Activated naive CD4-positive, alpha-beta T cell treated with anti-CD3 and anti-CD28 coated beads, Interleukin-2, amount 10 ng/mL, durations not matched to agents 7 days and 5 days (primary cell): ENCODE measurements at regions of chr22 and their contacts with region 1.

Region 1: DNA sequence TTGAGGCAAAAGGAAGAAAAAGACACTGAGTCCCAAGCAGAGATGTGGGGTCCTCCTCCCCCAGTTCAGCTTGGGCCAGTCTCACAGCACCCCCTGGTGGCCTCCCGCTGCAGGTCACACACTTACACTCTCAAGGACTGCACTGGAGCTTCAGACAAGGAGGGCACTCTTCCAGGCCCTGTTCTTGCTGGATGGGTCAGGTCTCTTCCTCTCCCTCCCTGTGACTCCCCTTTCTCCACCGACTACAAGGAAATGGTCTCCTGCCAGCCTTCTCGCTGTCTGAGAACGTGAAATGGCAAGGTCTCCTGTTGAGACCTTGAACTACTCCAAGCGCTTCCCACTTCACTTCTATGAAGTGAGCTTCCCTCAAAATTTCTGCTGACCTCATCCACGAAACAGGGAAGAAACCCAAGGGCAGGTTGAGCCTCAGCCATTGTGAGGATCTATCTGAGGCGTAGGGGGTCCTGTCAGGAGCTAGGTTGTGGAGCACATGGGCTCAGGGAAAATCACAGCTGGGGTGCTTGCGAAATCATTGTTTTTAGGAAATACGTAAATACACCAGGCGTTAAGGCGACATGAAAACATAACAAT is 11.2 kb upstream of the IGLL1 start:
- DNase-seq: peak; percentile 74
- H3K4me3 Mint-ChIP-seq: no peak overlapping the region
- H3K27ac Mint-ChIP-seq: no peak overlapping the region
- H3K4me1 Mint-ChIP-seq: no peaks in the 10 kb centered on the region
- H3K27me3 Mint-ChIP-seq: peaks cover 12% of the 10 kb centered on the region

Region 2: DNA sequence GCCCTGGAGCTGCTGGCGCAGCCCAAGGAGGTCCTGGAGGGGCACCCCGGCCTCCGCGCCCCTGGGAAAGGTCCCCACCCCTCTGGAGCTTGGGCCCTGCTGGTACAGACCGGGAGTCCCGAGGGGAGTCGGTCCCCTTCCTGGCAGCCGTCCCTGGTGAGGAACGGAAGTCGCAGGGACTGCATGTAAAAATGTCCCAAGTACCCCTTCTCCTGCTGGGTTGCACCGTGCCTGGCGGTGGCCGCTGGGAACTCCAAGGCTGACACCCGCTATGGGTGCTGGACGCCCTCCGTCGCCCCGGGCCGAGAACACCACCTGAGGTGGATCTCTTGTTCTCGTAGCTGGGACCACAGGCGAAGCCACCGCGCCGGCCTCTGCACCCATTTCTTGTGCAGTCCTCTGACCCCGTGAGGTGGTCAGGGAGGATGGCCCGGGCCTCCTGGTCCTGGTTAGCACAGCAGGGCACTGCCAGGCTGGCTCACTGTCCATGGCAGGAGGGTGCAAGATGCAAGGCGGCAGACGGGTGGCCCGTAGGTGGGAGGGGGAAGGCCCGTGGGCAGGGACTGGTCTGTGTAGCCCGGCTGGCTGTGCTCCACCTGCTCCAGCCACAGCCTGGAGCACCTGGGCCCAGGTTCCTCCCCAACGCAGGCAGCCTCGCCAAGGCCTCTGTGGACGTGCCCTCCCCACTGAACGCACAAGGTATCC is 176.4 kb before region 1 on chr22:
- CTCF ChIA-PET with region 1: no interaction called
- DNase-seq: no peak
- H3K4me3 Mint-ChIP-seq: no peak overlapping the region
- H3K27ac Mint-ChIP-seq: no peak overlapping the region
- H3K4me1 Mint-ChIP-seq: peaks cover 6% of the 10 kb centered on the region
- H3K27me3 Mint-ChIP-seq: peaks cover 12% of the 10 kb centered on the region

Region 3: GRCh38 chr22:23539135-23539838 is 52.0 kb before region 1 on chr22:
- CTCF ChIA-PET with region 1: interaction called, 22 read pairs
- DNase-seq: peak; percentile 84
- H3K4me3 Mint-ChIP-seq: no peak overlapping the region
- H3K27ac Mint-ChIP-seq: no peak overlapping the region
- H3K4me1 Mint-ChIP-seq: no peaks in the 10 kb centered on the region
- H3K27me3 Mint-ChIP-seq: peaks cover 36% of the 10 kb centered on the region